GM12878 (cell line): ENCODE measurements at regions of chr5 and their contacts with region 1.

Region 1: DNA sequence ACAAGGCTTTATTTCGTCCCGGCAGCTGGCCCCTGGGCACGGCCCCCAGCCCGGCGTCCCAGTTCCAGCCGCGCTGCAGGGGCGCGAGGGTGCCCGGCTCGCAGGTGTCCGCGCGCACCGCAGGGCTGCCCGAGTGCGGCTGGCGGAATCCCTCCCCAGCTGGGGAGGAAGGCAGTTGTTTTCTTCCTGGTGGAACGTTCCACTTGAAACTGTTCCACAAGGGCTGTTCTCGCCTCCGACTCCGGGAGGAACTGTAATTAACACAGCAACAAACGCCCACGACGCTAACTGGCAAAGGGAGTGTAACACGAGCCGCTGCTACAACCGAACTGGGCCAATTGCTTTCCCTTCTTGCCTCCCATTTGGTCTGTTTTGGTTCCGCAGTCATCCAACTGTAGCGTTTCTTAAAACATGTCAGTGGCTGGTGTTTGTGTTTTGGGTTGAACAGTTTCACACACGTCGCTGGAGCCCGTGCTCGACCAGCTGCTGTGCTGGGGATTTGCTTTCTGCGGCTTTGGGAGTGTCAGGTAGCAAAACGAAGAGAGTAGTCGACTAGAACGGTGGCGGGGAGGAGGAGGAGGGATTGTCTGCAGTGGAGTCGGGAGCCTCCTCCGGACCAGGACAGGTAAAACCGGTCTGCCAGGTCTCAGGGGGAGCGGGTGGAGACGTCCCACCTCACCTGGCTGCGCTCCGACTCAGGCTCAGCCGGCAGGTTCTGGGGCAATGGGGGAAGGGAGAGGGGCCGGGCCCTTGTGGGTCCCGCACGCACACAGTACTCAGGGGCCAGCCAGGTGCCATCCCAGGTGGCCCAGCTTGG is 131.6 kb upstream of the NIPBL start:
- DNase-seq: no peak
- ATAC-seq: peak; percentile 83
- H3K4me3 ChIP-seq: peak overlapping the region; percentile 59
- H3K27ac ChIP-seq: no peak overlapping the region
- H3K4me1 ChIP-seq: peaks cover 5% of the 10 kb centered on the region; the same call in 1 of the 2 replicates
- H3K27me3 ChIP-seq: peaks cover 0 to 3% of the 10 kb centered on the region in 2 experiments; a peak in 1 of 4 replicates
- CTCF ChIP-seq: no peak
- EP300 ChIP-seq: no peak
- POLR2A ChIP-seq: no peak
- RAD21 ChIP-seq: peak; percentile 53; the same call in 1 of the 2 replicates

Region 2: GRCh38 chr5:36944607-36945225 is 199.7 kb after region 1 on chr5:
- CTCF ChIA-PET with region 1: interaction called, 11 read pairs
- POLR2A ChIA-PET with region 1: no interaction called
- RAD21 ChIA-PET with region 1: interaction called, 4 read pairs
- SMC1A ChIA-PET with region 1: interaction called, 14 read pairs
- in situ Hi-C with region 1: no loop called
- intact Hi-C with region 1: loop called (anchors 2 kb)
- DNase-seq: no peak
- ATAC-seq: peak; percentile 38
- H3K4me3 ChIP-seq: no peak overlapping the region
- H3K27ac ChIP-seq: no peak overlapping the region
- H3K4me1 ChIP-seq: no peaks in the 10 kb centered on the region
- H3K27me3 ChIP-seq: no peaks in the 10 kb centered on the region
- CTCF ChIP-seq: peak in 2 of 3 experiments; percentile 44 to 47; a peak in 3 of 6 replicates
- EP300 ChIP-seq: no peak
- POLR2A ChIP-seq: no peak
- RAD21 ChIP-seq: peak; percentile 38; the same call in 1 of the 2 replicates

Region 3: GRCh38 chr5:37005946-37006540 is 261.1 kb after region 1 on chr5:
- CTCF ChIA-PET with region 1: interaction called, 47 read pairs
- POLR2A ChIA-PET with region 1: no interaction called
- RAD21 ChIA-PET with region 1: interaction called, 3 read pairs
- SMC1A ChIA-PET with region 1: interaction called, 27 read pairs
- in situ Hi-C with region 1: no loop called
- intact Hi-C with region 1: no loop called
- DNase-seq: no peak
- ATAC-seq: peak; percentile 66
- H3K4me3 ChIP-seq: no peak overlapping the region
- H3K27ac ChIP-seq: no peak overlapping the region
- H3K4me1 ChIP-seq: no peaks in the 10 kb centered on the region
- H3K27me3 ChIP-seq: no peaks in the 10 kb centered on the region
- CTCF ChIP-seq: peak; percentile 42 to 57 (median 56); a peak in 4 of 6 replicates
- EP300 ChIP-seq: no peak
- POLR2A ChIP-seq: no peak
- RAD21 ChIP-seq: peak; percentile 52; the same call in 1 of the 2 replicates